Calu3 (cell line): ENCODE measurements at regions of chr19 and their contacts with region 1.

Region 1: GRCh38 chr19:46542428-46543230 is 47.0 kb upstream of the PNMA8B start:
- DNase-seq: peak; percentile 86
- H3K4me3 Mint-ChIP-seq: no peak overlapping the region
- H3K27ac Mint-ChIP-seq: no peak overlapping the region
- H3K4me1 Mint-ChIP-seq: no peaks in the 10 kb centered on the region
- H3K27me3 Mint-ChIP-seq: peaks cover 29% of the 10 kb centered on the region
- CTCF ChIP-seq: peak; percentile 92

Region 2: GRCh38 chr19:46529622-46530462 is 12.8 kb before region 1 on chr19:
- CTCF ChIA-PET with region 1: interaction called, 7 read pairs
- intact Hi-C with region 1: loop called (anchors 1 kb)
- DNase-seq: peak; percentile 82
- H3K4me3 Mint-ChIP-seq: no peak overlapping the region
- H3K27ac Mint-ChIP-seq: no peak overlapping the region
- H3K4me1 Mint-ChIP-seq: peaks cover 12% of the 10 kb centered on the region
- H3K27me3 Mint-ChIP-seq: peaks cover 78% of the 10 kb centered on the region
- CTCF ChIP-seq: peak; percentile 91